PC-9 (cell line): ENCODE measurements at regions of chr12 and their contacts with region 1.

Region 1: GRCh38 chr12:26188127-26188526 is 7.2 kb upstream of the SSPN start:
- DNase-seq: no peak
- H3K4me3 ChIP-seq: no peak overlapping the region
- H3K27ac ChIP-seq: no peak overlapping the region
- H3K4me1 ChIP-seq: peaks cover 51% of the 10 kb centered on the region
- H3K27me3 ChIP-seq: no peaks in the 10 kb centered on the region
- CTCF ChIP-seq: no peak

Region 2: DNA sequence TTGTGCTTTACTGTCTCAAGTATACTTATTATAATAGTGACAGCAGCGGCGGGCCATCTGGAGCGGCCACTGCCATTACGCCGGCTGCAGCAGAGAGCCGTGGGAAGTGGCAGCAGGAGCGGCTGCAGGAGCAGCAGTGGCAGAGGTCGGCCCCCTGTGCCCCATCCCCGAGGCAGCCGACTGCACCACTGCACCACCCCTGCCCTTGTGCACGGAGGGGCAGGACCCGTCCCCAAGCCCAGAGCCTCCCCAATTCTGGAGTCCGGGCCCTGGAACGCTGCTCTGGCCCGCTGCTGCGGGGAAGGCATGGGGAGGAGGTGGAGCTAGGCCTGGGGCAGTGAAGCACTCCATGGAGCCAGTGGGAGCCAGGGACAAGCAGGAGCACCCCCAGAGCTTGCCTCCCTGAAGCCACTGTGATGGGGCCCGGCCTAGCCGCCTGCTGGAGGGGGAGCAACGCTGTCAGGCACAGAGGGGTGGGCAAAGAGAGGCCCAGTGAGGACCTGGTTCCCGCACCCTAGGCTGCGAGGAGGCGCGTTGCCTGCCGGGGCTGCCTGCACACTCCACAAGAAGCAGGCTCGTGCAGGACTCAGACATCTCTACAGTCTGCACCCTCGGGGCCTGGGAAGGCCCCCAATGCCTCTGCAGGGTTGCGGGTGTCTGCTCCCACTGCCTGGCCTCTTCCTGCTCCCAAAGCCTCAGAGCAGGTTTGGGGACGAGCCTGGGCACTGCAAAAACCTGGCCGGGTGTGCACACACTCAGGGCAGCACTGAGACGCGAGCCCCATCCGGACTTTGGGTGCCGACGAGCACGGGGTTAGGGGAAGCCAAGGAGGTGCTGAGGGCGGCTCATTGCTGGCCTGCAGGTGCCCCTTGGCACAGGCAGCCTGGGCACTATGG is 303.9 kb before region 1 on chr12:
- CTCF ChIA-PET with region 1: no interaction called
- POLR2A ChIA-PET with region 1: no interaction called
- intact Hi-C with region 1: no loop called
- DNase-seq: no peak
- H3K4me3 ChIP-seq: no peak overlapping the region
- H3K27ac ChIP-seq: no peak overlapping the region
- H3K4me1 ChIP-seq: peaks cover 12% of the 10 kb centered on the region
- H3K27me3 ChIP-seq: no peaks in the 10 kb centered on the region
- CTCF ChIP-seq: no peak

Region 3: GRCh38 chr12:26135010-26135420 is 53.1 kb before region 1 on chr12:
- CTCF ChIA-PET with region 1: no interaction called
- POLR2A ChIA-PET with region 1: no interaction called
- intact Hi-C with region 1: loop called (anchors 2 kb)
- DNase-seq: peak; percentile 93 to 95
- H3K4me3 ChIP-seq: no peak overlapping the region
- H3K27ac ChIP-seq: peak overlapping the region; percentile 45
- H3K4me1 ChIP-seq: peaks cover 33% of the 10 kb centered on the region
- H3K27me3 ChIP-seq: no peaks in the 10 kb centered on the region
- CTCF ChIP-seq: no peak

Region 4: GRCh38 chr12:26219736-26220135 is 31.6 kb after region 1 on chr12:
- CTCF ChIA-PET with region 1: no interaction called
- POLR2A ChIA-PET with region 1: no interaction called
- intact Hi-C with region 1: no loop called
- DNase-seq: no peak
- H3K4me3 ChIP-seq: no peak overlapping the region
- H3K27ac ChIP-seq: no peak overlapping the region
- H3K4me1 ChIP-seq: no peaks in the 10 kb centered on the region
- H3K27me3 ChIP-seq: no peaks in the 10 kb centered on the region
- CTCF ChIP-seq: no peak

Region 5: DNA sequence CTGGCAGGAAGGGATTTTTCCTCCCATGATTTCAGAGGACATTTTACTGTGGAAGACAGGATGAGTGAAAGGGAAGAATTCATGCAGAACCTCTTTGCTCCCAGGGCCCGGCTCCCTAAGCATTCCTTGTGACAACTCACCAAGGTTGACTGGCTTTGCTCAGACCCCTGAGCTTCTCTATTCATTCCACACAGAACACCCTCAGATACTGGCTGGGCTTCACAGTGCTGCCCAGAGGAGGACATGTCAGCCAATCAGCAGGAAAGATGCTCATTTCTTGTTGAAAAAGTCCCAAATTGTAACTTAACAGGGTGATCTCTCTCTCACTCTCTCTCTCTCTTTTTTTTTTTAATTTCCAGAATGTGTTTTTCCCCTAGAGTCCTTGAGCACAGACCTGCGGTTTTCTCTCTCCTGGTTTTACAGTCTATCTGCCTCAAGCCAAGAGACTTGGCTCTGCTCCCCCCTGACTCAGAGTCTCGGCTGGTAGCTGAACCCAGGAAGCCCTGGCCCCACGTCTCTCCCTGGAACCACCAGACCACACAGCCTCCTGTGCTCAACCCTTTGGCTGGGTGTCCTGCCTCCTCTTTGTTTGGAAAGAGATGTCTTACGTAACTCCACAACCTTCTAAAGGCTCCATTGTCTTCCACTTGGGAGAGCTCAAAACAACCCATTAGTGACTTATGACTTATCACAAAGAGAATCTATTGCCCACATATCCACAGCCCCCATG is 51.2 kb after region 1 on chr12:
- CTCF ChIA-PET with region 1: no interaction called
- POLR2A ChIA-PET with region 1: no interaction called
- intact Hi-C with region 1: loop called (anchors 2 kb)
- DNase-seq: peak; percentile 91 to 99
- H3K4me3 ChIP-seq: peak overlapping the region; percentile 23; the same call in 1 of the 2 replicates
- H3K27ac ChIP-seq: peak overlapping the region; percentile 85
- H3K4me1 ChIP-seq: peaks cover 72% of the 10 kb centered on the region
- H3K27me3 ChIP-seq: no peaks in the 10 kb centered on the region
- CTCF ChIP-seq: no peak

Region 6: DNA sequence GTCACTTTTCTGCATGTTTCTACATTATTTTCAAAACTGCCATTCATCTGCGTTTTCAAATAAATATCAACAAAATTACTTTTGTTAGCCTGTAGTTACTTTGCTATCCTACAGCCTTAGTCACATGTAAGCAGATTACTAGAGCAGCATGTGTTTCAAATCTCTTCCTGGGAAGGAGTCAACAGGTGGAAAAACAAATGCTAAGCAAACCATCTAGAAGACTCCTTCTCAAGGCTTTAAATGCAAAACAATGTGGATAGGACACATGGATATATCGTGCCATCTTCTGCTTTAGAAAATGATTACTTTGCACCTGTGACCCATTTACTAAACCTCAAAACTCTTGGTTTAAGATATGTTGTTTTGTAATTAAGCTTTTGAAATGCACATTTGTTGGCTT is 116.1 kb after region 1 on chr12:
- CTCF ChIA-PET with region 1: no interaction called
- POLR2A ChIA-PET with region 1: no interaction called
- intact Hi-C with region 1: no loop called
- DNase-seq: no peak
- H3K4me3 ChIP-seq: no peak overlapping the region
- H3K27ac ChIP-seq: no peak overlapping the region
- H3K4me1 ChIP-seq: peaks cover 7% of the 10 kb centered on the region; the same call in 1 of the 2 replicates
- H3K27me3 ChIP-seq: no peaks in the 10 kb centered on the region
- CTCF ChIP-seq: no peak

Region 7: GRCh38 chr12:26402648-26403047 is 214.5 kb after region 1 on chr12:
- CTCF ChIA-PET with region 1: no interaction called
- POLR2A ChIA-PET with region 1: no interaction called
- intact Hi-C with region 1: loop called (anchors 5 kb)
- DNase-seq: peak; percentile 77 to 93
- H3K4me3 ChIP-seq: no peak overlapping the region
- H3K27ac ChIP-seq: peak overlapping the region; percentile 44
- H3K4me1 ChIP-seq: peaks cover 22% of the 10 kb centered on the region
- H3K27me3 ChIP-seq: no peaks in the 10 kb centered on the region
- CTCF ChIP-seq: peak; percentile 55